ENCODE measurements at regions of chr1 and their contacts with region 1.

Region 1: DNA sequence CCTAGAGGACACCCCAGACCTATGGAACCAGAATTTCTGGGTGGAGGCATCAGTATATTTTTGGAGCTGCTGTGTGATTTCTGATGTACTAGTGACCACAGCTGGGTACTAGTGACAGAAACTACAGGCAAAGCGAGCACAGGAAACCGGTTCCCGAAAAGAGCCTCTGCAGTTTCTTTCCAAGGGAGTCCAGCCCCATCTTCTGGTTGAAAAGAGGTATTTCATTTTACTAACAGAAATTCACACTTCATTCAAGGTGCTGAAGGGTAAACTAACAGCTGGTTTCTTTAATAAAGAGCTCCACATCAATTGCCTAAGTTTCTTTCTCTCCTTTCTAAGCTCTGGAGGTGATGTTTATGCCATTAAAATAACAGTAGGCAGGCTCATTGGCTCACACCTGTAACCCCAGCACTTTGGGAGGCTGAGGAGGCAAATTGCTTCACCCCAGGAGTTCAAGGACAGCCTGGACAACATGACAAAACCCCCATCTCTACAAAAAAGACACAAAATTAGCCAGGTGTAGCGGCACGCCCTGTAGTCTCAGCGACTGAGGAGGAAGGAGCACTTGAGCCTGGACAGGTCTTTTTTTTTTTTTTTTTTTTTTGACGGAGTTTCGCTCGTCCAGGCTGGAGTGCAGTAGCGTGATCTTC is 22.0 kb downstream of the THAP3 start:
- DNase-seq: no peak
- ATAC-seq: peak; percentile 60

Region 2: DNA sequence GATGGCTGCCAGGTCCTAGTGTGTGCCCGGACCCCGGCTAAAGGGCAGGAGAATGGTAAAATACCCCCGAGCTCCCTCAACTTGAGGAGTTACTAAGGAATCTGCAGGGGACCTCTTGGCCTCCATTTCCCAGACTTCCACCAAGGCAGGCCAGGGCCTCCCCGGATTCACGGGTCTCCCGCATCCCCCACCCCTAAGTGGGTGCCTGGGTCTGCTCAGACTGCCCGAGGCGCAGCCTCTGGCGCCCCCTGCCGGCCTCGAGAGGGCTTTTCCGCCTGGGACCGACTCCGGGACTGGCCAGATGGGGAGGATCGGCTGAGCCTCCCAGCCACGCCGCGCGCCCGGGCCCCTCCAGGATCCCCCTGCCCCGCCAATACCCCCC is 156.8 kb before region 1 on chr1:
- intact Hi-C with region 1: loop called in 1 of 2 experiments (anchors 5 kb)
- DNase-seq: peak in 1 of 2 donors; percentile 79
- ATAC-seq: peak; percentile 74

Measured in left colon (tissue), 2 donors.